CD4-positive, alpha-beta memory T cell (primary cell): ENCODE measurements at regions of chr2 and their contacts with region 1.

Region 1: GRCh38 chr2:237060534-237061312 is 25.0 kb upstream of the COPS8 start:
- DNase-seq: peak in 3 of 5 donors; percentile 9 to 27 (median 25)
- H3K4me3 ChIP-seq: no peak overlapping the region
- H3K4me3 Mint-ChIP-seq: no peak overlapping the region
- H3K27ac ChIP-seq: no peak overlapping the region
- H3K27ac Mint-ChIP-seq: peak overlapping the region in 1 of 7 donors; percentile 29
- H3K4me1 ChIP-seq: no peaks in the 10 kb centered on the region
- H3K4me1 Mint-ChIP-seq: peaks cover 0 to 2% (median 0%) of the 10 kb centered on the region in 4 donors
- H3K27me3 ChIP-seq: no peaks in the 10 kb centered on the region
- H3K27me3 Mint-ChIP-seq: no peaks in the 10 kb centered on the region

Region 2: DNA sequence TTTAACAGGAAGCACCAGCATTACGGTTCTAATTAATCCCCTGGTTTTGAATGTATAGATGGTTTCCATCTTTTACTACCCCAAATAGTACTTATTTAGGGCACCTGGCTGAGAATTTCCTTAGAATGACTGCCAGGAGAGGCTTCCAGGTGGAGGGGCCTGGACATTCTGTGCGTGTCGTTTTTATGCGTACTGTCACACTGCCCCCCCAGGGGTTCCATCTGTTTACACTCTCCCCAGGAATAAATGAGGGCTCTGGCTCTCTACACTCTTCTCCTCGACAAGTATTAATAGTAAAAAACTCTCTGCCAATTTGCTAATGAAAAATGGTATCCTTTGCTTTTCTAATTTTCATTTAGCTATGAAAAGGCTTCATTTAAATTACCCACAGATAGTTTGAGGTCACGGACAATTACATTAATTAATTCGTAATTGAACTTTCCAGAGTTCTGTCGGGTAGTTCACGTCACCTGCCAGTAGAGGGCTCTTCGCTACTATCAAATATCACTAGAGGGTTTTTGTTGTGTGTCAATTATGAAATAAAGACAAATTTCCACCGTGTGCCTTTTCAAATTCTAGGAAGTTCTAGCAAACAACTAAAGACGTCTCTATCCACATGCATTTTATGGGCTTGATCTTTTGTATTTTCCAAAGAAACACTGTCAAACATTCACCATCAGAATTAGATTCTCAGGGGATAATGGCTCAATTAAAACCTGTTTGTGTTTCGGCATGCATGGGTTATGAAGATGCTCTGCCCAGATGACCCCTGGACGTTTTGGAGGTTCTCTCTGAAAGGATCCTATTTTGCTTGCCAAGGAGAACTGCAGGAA is 707.7 kb before region 1 on chr2:
- CTCF ChIA-PET with region 1: interaction called, 6 read pairs
- POLR2A ChIA-PET with region 1: no interaction called
- intact Hi-C with region 1: loop called (anchors 1 kb)
- DNase-seq: peak in 4 of 5 donors; percentile 39 to 51 (median 45)
- H3K4me3 ChIP-seq: no peak overlapping the region
- H3K4me3 Mint-ChIP-seq: peak overlapping the region in 1 of 8 donors; percentile 56
- H3K27ac ChIP-seq: no peak overlapping the region
- H3K27ac Mint-ChIP-seq: peak overlapping the region in 2 of 7 donors; percentile 12 to 72
- H3K4me1 ChIP-seq: no peaks in the 10 kb centered on the region
- H3K4me1 Mint-ChIP-seq: peaks cover 4 to 7% (median 6%) of the 10 kb centered on the region in 4 donors
- H3K27me3 ChIP-seq: no peaks in the 10 kb centered on the region
- H3K27me3 Mint-ChIP-seq: peaks cover 10 to 20% of the 10 kb centered on the region in 2 donors

Region 3: DNA sequence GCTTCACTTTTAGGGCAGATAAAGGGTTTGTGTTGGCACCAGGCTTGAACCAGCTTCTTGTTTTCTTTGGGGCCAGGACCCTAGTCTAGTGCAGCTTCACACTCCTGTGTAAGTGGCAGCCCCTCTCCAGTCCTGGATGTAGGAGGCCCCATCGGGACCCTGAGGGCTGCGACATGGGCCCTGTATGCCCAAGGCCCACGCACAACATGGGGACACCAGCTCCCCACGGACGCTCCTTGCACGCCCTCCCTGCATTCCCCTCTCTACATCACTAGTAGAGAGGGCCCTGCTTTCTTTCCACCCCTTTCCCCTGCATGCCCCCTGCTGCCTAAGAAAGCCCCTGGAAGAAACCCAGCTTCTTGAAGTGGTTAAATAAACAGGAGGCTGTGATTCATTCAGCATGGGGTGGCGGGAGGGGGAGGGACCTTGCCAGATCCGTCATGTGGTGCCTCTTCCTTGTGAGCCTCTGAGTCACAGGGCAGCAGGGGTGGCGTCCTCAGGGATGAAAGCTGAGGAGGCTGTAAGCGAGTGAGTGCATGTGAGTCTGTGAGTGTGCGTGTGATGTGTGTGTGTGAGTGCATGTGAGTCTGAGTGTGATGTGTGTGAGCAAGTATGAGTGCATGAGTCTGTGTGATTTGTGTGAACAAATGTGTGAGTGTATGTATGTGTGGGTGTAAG is 67.4 kb after region 1 on chr2:
- CTCF ChIA-PET with region 1: no interaction called
- POLR2A ChIA-PET with region 1: no interaction called
- intact Hi-C with region 1: no loop called
- DNase-seq: no peak
- H3K4me3 ChIP-seq: no peak overlapping the region
- H3K4me3 Mint-ChIP-seq: no peak overlapping the region
- H3K27ac ChIP-seq: no peak overlapping the region
- H3K27ac Mint-ChIP-seq: no peak overlapping the region
- H3K4me1 ChIP-seq: no peaks in the 10 kb centered on the region
- H3K4me1 Mint-ChIP-seq: no peaks in the 10 kb centered on the region
- H3K27me3 ChIP-seq: no peaks in the 10 kb centered on the region
- H3K27me3 Mint-ChIP-seq: no peaks in the 10 kb centered on the region

Region 4: DNA sequence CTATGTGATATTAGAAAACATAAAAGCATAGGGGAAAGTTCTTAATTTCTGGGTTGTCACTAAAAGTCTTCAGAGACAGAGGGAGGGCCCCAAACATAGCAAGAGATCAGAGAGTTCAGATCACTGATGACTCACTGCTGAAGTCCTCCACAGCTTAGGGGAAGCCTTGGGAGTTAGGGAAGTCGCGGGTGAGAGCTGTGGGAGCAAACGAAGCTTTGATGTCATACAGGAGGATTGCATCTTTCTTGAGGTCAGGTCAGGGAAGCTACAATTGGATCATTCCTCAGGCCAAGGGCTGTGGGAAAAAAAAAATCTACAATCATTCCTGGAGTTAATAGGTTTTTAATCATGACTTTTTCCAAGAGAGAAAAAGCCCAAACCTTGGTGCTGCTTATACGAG is 121.1 kb after region 1 on chr2:
- CTCF ChIA-PET with region 1: no interaction called
- POLR2A ChIA-PET with region 1: no interaction called
- intact Hi-C with region 1: no loop called
- DNase-seq: no peak
- H3K4me3 ChIP-seq: no peak overlapping the region
- H3K4me3 Mint-ChIP-seq: no peak overlapping the region
- H3K27ac ChIP-seq: no peak overlapping the region
- H3K27ac Mint-ChIP-seq: no peak overlapping the region
- H3K4me1 ChIP-seq: no peaks in the 10 kb centered on the region
- H3K4me1 Mint-ChIP-seq: no peaks in the 10 kb centered on the region
- H3K27me3 ChIP-seq: no peaks in the 10 kb centered on the region
- H3K27me3 Mint-ChIP-seq: peaks cover 18 to 46% of the 10 kb centered on the region in 2 donors